PC-3 (cell line): ENCODE measurements at regions of chr11 and their contacts with region 1.

Region 1: GRCh38 chr11:22539821-22540256 is 85.8 kb downstream of the FANCF start:
- DNase-seq: peak; percentile 48
- ATAC-seq: 0 out of 2 replicates have a peak, but pooled peaks have one; percentile 54
- H3K4me3 ChIP-seq: no peak overlapping the region
- H3K27ac ChIP-seq: no peak overlapping the region
- H3K4me1 ChIP-seq: no peaks in the 10 kb centered on the region
- H3K27me3 ChIP-seq: 0 out of 2 replicates have a peak, but pooled peaks cover 6% of the 10 kb centered on the region
- CTCF ChIP-seq: peak; percentile 69

Region 2: GRCh38 chr11:22337596-22338485 is 202.0 kb before region 1 on chr11 and contains the start of gene SLC17A6:
- CTCF ChIA-PET with region 1: no interaction called
- POLR2A ChIA-PET with region 1: no interaction called
- intact Hi-C with region 1: loop called (anchors 1 kb)
- DNase-seq: peak; percentile 57
- ATAC-seq: no peak
- H3K4me3 ChIP-seq: no peak within 1 kb of the TSS
- H3K27ac ChIP-seq: no peak within 1 kb of the TSS
- H3K4me1 ChIP-seq: no peaks in the 10 kb centered on the region
- H3K27me3 ChIP-seq: peaks cover 48% of the 10 kb centered on the region
- CTCF ChIP-seq: no peak
- total RNA-seq, gene SLC17A6: not detected in 2 replicates

Region 3: DNA sequence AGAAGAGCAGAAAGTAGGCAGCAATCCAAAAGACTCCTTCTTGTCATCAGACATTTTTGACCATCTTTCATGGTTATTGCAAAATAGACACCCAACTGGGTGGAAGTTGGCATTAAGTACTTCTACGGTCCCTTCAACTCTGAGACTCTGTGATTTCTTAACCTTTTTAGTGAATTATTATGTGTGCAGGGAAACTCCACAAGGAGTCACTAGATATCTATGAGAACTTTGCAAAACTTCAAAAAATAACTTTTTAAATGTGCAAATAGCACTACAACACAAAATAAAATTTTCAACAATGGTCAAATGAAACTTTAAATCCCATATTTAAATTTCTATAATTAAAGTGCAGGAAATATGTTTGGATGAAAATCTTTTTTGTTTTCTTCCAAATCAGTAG is 112.9 kb before region 1 on chr11:
- CTCF ChIA-PET with region 1: no interaction called
- POLR2A ChIA-PET with region 1: no interaction called
- intact Hi-C with region 1: loop called (anchors 1 kb)
- DNase-seq: no peak
- ATAC-seq: no peak
- H3K4me3 ChIP-seq: no peak overlapping the region
- H3K27ac ChIP-seq: no peak overlapping the region
- H3K4me1 ChIP-seq: no peaks in the 10 kb centered on the region
- H3K27me3 ChIP-seq: peaks cover 28% of the 10 kb centered on the region
- CTCF ChIP-seq: peak; percentile 47

Region 4: DNA sequence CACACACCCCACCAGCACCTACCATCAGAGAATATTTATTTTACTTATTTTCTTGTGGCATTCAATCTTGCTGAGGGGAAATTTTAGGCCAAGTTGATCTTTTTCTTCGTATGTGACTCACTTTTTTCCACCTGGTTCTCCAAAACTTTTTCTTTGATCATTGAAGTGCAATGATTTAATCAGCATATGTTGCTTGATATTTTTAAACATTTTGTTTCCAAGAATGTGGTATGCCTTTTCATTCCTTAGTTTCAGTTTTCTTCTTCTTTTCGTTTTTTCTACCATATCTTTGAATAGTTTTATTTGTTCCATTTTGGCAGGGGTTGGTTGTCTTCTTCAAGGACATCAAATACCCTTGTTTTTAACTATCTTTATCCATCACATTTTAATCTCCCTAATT is 57.2 kb after region 1 on chr11:
- CTCF ChIA-PET with region 1: no interaction called
- POLR2A ChIA-PET with region 1: no interaction called
- intact Hi-C with region 1: no loop called
- DNase-seq: no peak
- ATAC-seq: no peak
- H3K4me3 ChIP-seq: no peak overlapping the region
- H3K27ac ChIP-seq: no peak overlapping the region
- H3K4me1 ChIP-seq: no peaks in the 10 kb centered on the region
- H3K27me3 ChIP-seq: no peaks in the 10 kb centered on the region
- CTCF ChIP-seq: no peak